Activated CD4-positive, alpha-beta T cell treated with anti-CD3 and anti-CD28 coated beads, Interleukin-2, amount 10 ng/mL, durations not matched to agents 24 days and 14 days (primary cell): ENCODE measurements at regions of chr13 and their contacts with region 1.

Region 1: DNA sequence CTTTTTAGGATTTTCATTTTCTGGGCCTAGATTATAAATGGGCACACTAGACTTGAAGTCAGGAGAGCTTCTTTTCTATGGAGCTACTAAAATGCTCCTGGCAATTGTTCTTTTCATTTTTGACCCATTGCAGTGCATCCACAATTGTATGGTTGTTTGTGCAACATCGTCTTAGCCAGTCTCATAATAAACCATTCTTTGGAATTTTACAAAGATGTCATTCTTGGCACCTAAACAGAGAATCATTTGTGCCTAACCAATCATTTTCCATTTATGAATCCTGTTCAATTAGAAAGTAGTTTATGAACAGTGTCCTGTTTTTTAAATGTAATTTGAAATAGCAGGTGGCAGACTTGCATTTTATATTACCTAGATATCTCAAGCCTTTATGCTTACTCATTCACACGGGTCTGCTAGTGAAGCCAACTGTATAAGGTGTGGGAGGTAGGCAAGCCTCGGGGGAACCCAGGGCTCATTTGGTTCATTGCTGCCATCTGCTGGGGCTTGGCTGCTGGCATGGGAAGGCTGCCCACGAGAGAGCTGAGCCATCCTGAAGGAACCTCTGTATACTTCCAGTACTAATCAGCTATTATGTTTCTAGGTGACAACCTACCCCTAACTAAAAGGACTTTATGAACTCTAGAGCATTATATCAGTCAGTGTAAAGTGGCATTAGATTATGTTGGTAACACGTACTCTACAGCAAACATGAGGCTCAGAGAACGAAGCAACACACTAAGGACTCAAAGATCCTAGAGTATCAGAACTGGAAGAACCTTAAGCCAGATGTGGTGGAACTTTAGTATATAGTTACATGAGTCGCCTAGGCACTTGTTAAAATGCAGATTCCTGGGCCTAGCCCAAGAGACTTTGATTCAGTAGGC is 60.0 kb downstream of the TPT1 start:
- DNase-seq: peak; percentile 78
- H3K4me3 Mint-ChIP-seq: no peak overlapping the region
- H3K27ac Mint-ChIP-seq: no peak overlapping the region
- H3K4me1 Mint-ChIP-seq: peaks cover 2% of the 10 kb centered on the region
- H3K27me3 Mint-ChIP-seq: no peaks in the 10 kb centered on the region

Region 2: GRCh38 chr13:45047394-45048310 is 233.3 kb before region 1 on chr13:
- intact Hi-C with region 1: loop called (anchors 1 kb)
- DNase-seq: peak; percentile 92
- H3K4me3 Mint-ChIP-seq: peak overlapping the region; percentile 83
- H3K27ac Mint-ChIP-seq: no peak overlapping the region
- H3K4me1 Mint-ChIP-seq: peaks cover 12% of the 10 kb centered on the region
- H3K27me3 Mint-ChIP-seq: peaks cover 47% of the 10 kb centered on the region

Region 3: DNA sequence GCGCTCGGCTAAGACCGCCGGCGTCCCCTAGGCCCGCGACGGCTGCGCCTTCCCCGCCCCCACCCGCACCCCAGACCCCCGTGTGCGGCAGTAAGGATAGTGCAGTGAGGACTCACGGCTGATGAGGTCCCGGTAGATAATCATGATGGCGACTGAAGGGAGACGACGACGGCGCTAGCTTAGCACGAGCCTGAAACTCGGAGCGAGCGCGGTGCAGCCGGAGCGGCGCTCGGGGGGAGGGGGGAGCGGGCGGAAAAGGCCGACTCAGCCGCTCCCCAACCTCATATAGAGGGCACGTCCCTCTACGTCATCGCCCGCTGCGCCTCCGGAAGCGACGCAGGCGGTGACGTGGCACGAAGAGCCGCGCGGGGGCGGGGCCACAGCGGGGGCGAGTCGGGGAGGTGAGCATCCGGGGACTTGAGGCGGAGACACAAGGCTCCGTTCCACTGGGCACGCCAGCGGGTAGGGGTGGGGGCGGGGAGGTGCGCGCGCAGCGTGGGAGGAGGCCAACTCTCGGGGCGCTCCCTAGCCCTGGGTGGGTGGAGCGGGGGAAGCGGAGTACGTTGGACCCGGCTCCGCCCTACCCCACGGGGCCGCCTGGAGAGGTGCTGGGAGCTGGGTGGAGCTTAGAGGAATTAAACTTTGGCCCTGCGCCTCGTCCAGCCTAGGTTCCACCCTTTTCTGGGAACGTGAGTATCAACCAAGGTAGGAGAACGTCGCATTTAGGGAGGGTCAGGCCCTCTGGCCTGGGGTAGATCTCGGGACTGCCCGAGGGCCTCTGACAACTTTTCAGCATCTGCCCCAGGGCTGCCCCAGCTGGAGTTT is 60.1 kb after region 1 on chr13 and contains the start of gene TPT1:
- intact Hi-C with region 1: no loop called
- DNase-seq: peak; percentile 100
- H3K4me3 Mint-ChIP-seq: peak within 1 kb of the TSS; percentile 99
- H3K27ac Mint-ChIP-seq: peak within 1 kb of the TSS; percentile 99
- H3K4me1 Mint-ChIP-seq: peaks cover 45% of the 10 kb centered on the region
- H3K27me3 Mint-ChIP-seq: no peaks in the 10 kb centered on the region
- total RNA-seq, gene TPT1: 2,188 and 2,224 TPM in 2 replicates